IMR-90 (cell line): ENCODE measurements at regions of chr12 and their contacts with region 1.

Region 1: DNA sequence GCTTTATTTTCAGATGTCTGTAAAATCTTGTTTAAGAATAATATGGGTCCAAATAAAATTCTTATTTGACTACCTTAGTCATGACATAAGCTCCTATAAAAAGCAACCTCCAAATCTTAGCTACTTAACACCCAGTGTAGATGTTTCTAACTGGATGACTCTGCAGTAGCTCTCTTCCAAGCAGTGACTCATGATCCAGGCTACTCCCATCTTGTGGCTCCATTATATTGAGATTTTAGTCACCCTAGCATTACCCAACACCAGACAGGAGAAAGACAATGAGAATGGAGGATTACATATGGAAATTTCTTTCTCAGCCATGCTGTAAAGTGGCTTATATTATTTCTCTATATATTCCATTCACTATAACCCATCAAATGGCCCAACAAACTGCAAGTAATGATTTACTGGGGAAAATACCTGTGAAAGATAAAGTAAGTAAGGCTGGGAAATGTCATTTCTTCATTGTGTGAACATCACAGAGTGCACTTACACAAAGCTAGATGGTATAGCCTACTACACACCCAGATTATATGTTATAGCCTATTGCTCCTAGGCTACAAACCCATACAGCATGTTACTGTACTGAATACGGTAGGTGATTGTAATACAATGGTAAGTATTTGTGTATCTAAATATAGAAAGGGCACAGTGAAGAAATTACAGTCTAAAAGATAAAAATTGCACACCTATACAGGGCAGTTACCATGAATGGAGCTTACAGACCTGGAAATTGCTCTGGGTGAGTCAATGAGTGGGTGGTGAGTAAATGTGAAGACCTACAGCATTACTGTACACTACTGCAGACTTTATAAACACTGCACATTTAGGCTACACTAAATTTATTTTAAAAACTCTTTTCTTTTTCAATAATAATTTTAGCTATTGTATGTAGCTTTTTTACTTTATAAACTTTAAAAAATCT is 163.2 kb downstream of the DYRK2 start:
- DNase-seq: peak; percentile 93
- ATAC-seq: peak; percentile 50
- H3K4me3 ChIP-seq: no peak overlapping the region
- H3K27ac ChIP-seq: no peak overlapping the region
- H3K4me1 ChIP-seq: peaks cover 5% of the 10 kb centered on the region
- H3K27me3 ChIP-seq: no peaks in the 10 kb centered on the region
- CTCF ChIP-seq: no peak
- POLR2A ChIP-seq: no peak
- RAD21 ChIP-seq: no peak

Region 2: DNA sequence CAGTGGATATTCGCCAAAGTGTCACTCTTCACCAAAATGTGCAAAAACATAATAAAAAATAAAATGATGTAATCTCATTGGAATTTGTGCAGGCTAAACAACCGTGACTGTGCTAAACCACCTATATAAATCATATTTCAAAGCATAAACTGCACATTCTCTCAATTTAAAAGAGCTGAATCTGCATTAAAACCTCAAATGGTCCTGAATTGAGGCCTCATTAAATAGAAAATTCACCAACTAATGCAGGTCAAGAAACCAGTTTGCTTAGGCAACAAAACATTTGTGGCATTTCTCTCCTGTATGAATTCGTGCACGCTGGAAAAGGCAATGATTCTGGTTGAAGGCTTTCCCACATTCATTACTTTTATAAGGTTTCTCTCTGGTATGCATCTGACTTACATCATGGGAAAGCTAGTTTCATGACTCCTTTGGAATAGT is 97.4 kb after region 1 on chr12:
- CTCF ChIA-PET with region 1: no interaction called
- POLR2A ChIA-PET with region 1: no interaction called
- dilution Hi-C with region 1: no loop called
- in situ Hi-C with region 1: no loop called
- intact Hi-C with region 1: loop called (anchors 5 kb)
- DNase-seq: peak; percentile 75
- ATAC-seq: no peak; the same call in 1 of the 2 replicates
- H3K4me3 ChIP-seq: no peak overlapping the region
- H3K27ac ChIP-seq: no peak overlapping the region
- H3K4me1 ChIP-seq: peaks cover 8% of the 10 kb centered on the region
- H3K27me3 ChIP-seq: no peaks in the 10 kb centered on the region
- CTCF ChIP-seq: no peak
- POLR2A ChIP-seq: no peak
- RAD21 ChIP-seq: no peak